ENCODE measurements at regions of chr2 and their contacts with region 1.

Region 1: GRCh38 chr2:86035883-86036668 is 69.6 kb downstream of the POLR1A start:
- DNase-seq: peak; percentile 82
- H3K4me3 Mint-ChIP-seq: peak overlapping the region; percentile 51
- H3K27ac Mint-ChIP-seq: peak overlapping the region; percentile 92
- H3K4me1 Mint-ChIP-seq: peaks cover 67% of the 10 kb centered on the region
- H3K27me3 Mint-ChIP-seq: no peaks in the 10 kb centered on the region

Region 2: GRCh38 chr2:85750587-85751575 is 285.2 kb before region 1 on chr2:
- CTCF ChIA-PET with region 1: no interaction called
- POLR2A ChIA-PET with region 1: no interaction called
- intact Hi-C with region 1: loop called (anchors 5 kb)
- DNase-seq: peak; percentile 68
- H3K4me3 Mint-ChIP-seq: no peak overlapping the region
- H3K27ac Mint-ChIP-seq: no peak overlapping the region
- H3K4me1 Mint-ChIP-seq: peaks cover 13% of the 10 kb centered on the region
- H3K27me3 Mint-ChIP-seq: peaks cover 41% of the 10 kb centered on the region

Region 3: DNA sequence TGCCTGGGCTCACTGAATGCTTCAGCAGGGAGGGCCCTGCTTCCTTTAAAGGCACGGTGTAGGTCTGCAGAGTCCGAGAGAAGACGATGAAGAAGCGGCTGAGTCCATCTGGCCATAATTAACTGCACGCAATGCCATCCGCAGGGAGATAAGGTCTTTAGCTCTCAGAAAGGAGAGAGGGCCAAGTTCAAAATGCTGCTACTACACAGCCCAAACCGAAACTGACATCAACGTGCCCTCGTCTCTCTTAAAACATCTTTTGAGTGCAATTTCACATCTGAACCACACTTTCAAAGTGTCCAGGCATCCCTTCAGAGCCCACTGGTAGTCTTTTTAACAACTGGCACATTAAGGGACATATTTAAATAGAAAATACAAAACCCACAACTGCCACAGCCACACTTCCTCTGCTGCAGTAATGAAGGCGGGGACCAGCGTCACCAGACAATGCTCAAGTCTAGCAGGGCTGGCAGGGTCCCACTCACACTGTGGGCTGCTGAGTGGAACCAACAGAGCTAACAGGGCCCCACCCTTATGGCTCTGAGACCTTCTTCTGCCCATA is 183.1 kb before region 1 on chr2:
- CTCF ChIA-PET with region 1: interaction called, 3 read pairs
- POLR2A ChIA-PET with region 1: interaction called, 9 read pairs
- intact Hi-C with region 1: loop called (anchors 2 kb)
- DNase-seq: peak; percentile 69
- H3K4me3 Mint-ChIP-seq: peak overlapping the region; percentile 77
- H3K27ac Mint-ChIP-seq: peak overlapping the region; percentile 98
- H3K4me1 Mint-ChIP-seq: peaks cover 71% of the 10 kb centered on the region
- H3K27me3 Mint-ChIP-seq: no peaks in the 10 kb centered on the region

Region 4: GRCh38 chr2:85999061-85999831 is 36.8 kb before region 1 on chr2:
- CTCF ChIA-PET with region 1: interaction called, 6 read pairs
- POLR2A ChIA-PET with region 1: interaction called, 11 read pairs
- intact Hi-C with region 1: loop called (anchors 1 kb)
- DNase-seq: peak; percentile 63
- H3K4me3 Mint-ChIP-seq: peak overlapping the region; percentile 5
- H3K27ac Mint-ChIP-seq: peak overlapping the region; percentile 67
- H3K4me1 Mint-ChIP-seq: peaks cover 35% of the 10 kb centered on the region
- H3K27me3 Mint-ChIP-seq: peaks cover 2% of the 10 kb centered on the region

Region 5: DNA sequence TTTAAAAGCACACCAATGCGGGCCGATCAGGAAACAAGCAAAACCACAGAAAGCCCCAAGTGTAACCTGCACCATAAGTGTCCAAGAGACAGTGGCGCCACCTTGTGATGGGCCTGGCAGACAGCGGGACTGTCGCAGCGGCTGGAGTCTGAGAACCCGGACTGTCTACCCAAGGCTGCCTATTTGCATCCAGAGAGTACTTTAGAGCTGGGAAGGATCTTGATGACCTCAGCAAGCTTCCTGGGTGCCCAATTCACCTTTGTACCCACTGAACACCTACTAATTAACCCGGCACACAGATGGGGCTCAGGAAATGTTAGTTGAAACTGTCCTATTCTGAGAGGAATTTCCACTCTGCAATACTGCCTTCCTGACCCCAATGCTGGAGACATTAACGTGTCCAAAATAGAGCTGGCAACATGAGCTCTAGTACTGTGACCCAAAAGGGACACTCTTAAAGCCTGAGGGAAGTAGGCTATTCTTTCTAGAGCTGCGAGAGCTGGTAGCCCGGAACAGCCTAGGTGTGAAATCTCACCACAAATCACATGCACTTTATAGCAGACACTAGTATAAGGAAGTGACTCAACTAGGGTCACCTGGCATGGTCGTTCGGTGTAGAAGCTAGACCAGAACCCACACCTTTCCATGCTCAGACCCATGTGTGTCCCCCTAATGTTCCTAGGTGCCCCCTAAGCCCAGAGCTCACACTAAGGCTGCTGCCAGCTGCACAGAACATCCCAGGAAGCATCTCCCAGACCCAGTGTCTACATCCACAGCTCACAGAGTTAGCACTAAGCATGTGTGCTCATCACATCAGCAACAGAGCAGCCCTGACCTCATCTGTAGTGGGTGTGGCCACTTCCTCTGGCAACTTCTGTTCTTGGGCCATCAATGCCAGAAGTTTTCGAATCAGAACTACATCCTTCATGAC is 44.2 kb after region 1 on chr2:
- CTCF ChIA-PET with region 1: interaction called, 25 read pairs
- POLR2A ChIA-PET with region 1: no interaction called
- intact Hi-C with region 1: loop called (anchors 1 kb)
- DNase-seq: peak; percentile 86
- H3K4me3 Mint-ChIP-seq: no peak overlapping the region
- H3K27ac Mint-ChIP-seq: peak overlapping the region; percentile 65
- H3K4me1 Mint-ChIP-seq: peaks cover 27% of the 10 kb centered on the region
- H3K27me3 Mint-ChIP-seq: no peaks in the 10 kb centered on the region

Region 6: DNA sequence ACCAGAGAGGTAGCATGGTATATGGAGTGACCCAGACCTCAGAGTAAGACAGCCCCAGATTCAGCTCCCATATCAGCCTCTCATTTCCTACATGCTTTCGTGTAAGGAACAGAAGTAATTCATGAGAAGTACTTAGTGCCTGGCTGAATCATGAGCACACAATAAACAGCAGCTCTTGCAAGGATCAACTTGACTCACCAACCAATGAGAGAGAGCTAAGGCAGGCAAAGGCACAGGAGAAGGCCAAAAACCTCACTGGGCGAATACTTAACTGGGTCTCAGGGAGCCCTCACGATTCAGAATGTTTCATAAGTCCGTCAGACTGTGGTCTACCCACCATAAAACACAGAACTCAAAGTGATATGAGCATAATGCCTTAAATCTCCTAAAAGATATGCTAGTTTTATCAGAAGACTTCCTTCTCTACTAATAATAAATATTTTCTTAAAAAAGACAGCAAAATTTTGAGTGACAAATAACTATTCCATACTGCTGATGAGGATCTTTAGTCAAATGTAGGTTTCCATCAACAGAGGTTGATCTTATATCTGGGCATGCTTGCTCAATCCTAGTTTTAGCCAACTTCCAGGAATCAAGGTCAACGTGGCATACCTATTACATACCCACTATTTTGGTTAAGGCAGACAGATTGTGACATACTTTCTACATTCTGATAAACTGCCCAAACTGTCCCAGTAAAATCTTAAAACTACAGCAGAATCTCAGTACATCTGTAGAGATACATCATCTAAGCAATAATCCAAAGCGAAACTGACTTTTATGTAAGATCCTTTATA is 124.3 kb after region 1 on chr2:
- CTCF ChIA-PET with region 1: no interaction called
- POLR2A ChIA-PET with region 1: no interaction called
- intact Hi-C with region 1: no loop called
- DNase-seq: no peak
- H3K4me3 Mint-ChIP-seq: no peak overlapping the region
- H3K27ac Mint-ChIP-seq: peak overlapping the region; percentile 23
- H3K4me1 Mint-ChIP-seq: no peaks in the 10 kb centered on the region
- H3K27me3 Mint-ChIP-seq: no peaks in the 10 kb centered on the region

Region 7: GRCh38 chr2:86195055-86195807 is 159.2 kb after region 1 on chr2 and contains the start of gene IMMT:
- CTCF ChIA-PET with region 1: no interaction called
- POLR2A ChIA-PET with region 1: no interaction called
- intact Hi-C with region 1: loop called (anchors 10 kb)
- DNase-seq: peak; percentile 96
- H3K4me3 Mint-ChIP-seq: peak within 1 kb of the TSS; percentile 91
- H3K27ac Mint-ChIP-seq: peak within 1 kb of the TSS; percentile 88
- H3K4me1 Mint-ChIP-seq: peaks cover 39% of the 10 kb centered on the region
- H3K27me3 Mint-ChIP-seq: no peaks in the 10 kb centered on the region
- total RNA-seq, gene IMMT: 170 to 172 TPM

Region 8: GRCh38 chr2:86562922-86563649 is 527.0 kb after region 1 on chr2 and contains the start of gene CHMP3:
- CTCF ChIA-PET with region 1: no interaction called
- POLR2A ChIA-PET with region 1: no interaction called
- intact Hi-C with region 1: loop called (anchors 5 kb)
- DNase-seq: peak; percentile 98
- H3K4me3 Mint-ChIP-seq: peak within 1 kb of the TSS; percentile 94
- H3K27ac Mint-ChIP-seq: peak within 1 kb of the TSS; percentile 98
- H3K4me1 Mint-ChIP-seq: peaks cover 27% of the 10 kb centered on the region
- H3K27me3 Mint-ChIP-seq: no peaks in the 10 kb centered on the region
- total RNA-seq, gene CHMP3: 36.5 to 38.6 TPM